ENCODE measurements at regions of chr6 and their contacts with region 1.

Region 1: DNA sequence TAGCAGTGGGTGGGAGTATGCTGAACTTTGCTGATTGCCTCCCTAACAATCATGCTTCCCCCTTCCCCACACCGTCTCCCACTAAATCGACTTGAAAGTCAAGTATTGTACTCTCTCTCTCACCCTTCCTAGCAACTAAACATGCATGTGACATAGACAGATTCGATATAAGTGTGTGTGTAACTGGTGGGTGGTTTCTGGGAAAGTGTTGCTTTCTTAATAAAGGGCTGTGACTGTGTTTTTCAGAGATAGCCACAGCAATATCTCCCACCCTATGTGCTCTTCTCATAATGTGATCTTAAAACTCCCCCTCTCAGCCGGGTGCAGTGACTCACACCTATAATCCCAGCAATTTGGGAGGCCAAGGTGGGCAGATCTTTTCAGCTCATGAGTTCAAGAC is 49.3 kb upstream of the E2F3 start:
- DNase-seq: no peak
- ATAC-seq: no peak
- H3K4me3 ChIP-seq: no peak overlapping the region
- H3K27ac ChIP-seq: no peak overlapping the region
- H3K4me1 ChIP-seq: no peaks in the 10 kb centered on the region
- H3K27me3 ChIP-seq: peaks cover 6% of the 10 kb centered on the region; the same call in 1 of the 2 replicates
- CTCF ChIP-seq: no peak

Region 2: GRCh38 chr6:20366091-20366832 is 13.9 kb after region 1 on chr6:
- CTCF ChIA-PET with region 1: no interaction called
- POLR2A ChIA-PET with region 1: no interaction called
- intact Hi-C with region 1: no loop called
- DNase-seq: no peak
- ATAC-seq: no peak
- H3K4me3 ChIP-seq: no peak overlapping the region
- H3K27ac ChIP-seq: no peak overlapping the region
- H3K4me1 ChIP-seq: no peaks in the 10 kb centered on the region
- H3K27me3 ChIP-seq: 0 out of 2 replicates have a peak, but pooled peaks cover 10% of the 10 kb centered on the region
- CTCF ChIP-seq: no peak

Region 3: DNA sequence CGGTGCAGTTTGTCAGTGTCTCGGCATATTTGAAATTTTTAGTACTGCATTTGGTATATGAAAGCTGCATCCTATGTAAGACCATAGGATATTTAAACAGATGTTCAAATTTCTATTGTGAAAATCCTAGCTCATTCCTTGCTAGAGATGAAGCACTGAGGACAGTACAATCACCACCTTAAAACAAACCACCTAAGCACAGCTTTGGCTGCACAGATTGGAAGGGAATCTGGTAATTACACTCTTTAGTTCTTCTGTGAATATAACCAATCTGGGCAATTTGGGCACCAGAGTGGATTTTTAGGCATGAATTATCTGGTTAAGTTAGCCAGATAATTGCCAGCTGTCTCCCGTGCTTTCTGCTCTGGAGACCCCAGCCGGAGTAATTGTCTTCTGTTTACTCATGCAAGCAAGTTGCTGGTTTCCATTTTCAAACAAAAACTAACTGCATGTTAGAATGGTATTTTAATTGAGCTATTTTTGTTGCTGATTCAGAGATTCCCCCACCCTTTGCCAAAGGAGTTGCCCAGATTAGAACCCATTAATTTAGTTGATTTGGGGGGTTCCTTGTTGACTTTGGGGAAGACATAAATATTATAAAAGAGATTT is 86.2 kb after region 1 on chr6:
- CTCF ChIA-PET with region 1: no interaction called
- POLR2A ChIA-PET with region 1: no interaction called
- intact Hi-C with region 1: no loop called
- DNase-seq: no peak
- ATAC-seq: no peak
- H3K4me3 ChIP-seq: no peak overlapping the region
- H3K27ac ChIP-seq: no peak overlapping the region
- H3K4me1 ChIP-seq: no peaks in the 10 kb centered on the region
- H3K27me3 ChIP-seq: no peaks in the 10 kb centered on the region
- CTCF ChIP-seq: no peak

Region 4: GRCh38 chr6:21478863-21479539 is 1126.7 kb after region 1 on chr6:
- CTCF ChIA-PET with region 1: interaction called, 15 read pairs
- POLR2A ChIA-PET with region 1: no interaction called
- intact Hi-C with region 1: no loop called
- DNase-seq: peak; percentile 32
- ATAC-seq: peak; percentile 64
- H3K4me3 ChIP-seq: peak overlapping the region; percentile 47
- H3K27ac ChIP-seq: no peak overlapping the region
- H3K4me1 ChIP-seq: 0 out of 2 replicates have a peak, but pooled peaks cover 6% of the 10 kb centered on the region
- H3K27me3 ChIP-seq: no peaks in the 10 kb centered on the region
- CTCF ChIP-seq: no peak

Measured in PC-3 (cell line).